CD4-positive, alpha-beta T cell (primary cell): ENCODE measurements at regions of chr7 and their contacts with region 1.

Region 1: DNA sequence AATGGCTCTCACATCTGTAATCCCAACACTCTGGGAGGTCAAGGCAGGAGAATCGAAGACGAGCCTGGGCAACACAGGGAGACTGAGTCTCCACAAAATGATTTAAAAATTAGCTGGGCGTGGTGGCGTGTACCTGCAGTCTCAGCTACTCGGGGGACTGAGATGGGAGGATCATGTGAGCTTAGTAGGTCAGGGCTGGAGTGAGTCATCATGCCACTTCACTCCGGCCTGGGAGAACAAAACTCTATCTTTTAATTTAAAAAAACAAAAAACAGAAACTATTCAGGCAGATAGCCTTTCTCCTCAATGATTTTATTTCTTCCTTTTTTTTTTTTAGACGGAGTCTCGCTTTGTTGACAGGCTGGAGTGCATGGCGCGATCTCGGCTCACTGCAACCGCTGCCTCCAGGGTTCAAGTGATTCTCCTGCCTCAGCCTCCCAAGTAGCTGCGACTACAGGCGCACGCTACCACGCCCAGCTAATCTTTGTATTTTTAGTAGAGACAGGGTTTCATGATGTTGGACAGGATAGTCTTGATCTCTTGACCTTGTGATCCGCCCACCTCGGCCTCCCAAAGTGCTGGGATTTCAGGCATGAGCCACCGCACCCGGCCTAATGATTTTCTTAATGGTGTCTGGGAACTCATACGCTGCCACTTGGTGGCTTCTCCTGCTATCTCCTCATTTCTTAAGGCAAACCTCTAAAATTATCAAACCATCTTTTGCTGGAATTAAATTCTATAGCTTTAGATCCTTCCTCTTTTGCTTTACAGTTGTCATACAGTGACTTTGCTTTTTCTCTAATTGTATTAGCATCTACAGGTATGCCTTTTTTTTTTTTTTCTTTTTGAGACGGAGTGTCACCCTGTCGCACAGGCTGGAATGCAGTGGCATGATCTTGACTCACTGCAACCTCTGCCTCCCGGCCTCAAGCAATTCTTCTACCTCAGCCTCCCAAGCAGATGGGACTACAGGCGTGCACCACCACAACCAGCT is 22.9 kb downstream of the SRPK2 start:
- DNase-seq: peak in 1 of 14 experiments; percentile 8
- ATAC-seq: no peak
- H3K4me3 ChIP-seq: no peak overlapping the region
- H3K4me3 Mint-ChIP-seq: no peak overlapping the region
- H3K27ac ChIP-seq: no peak overlapping the region
- H3K27ac Mint-ChIP-seq: no peak overlapping the region
- H3K4me1 ChIP-seq: peaks cover 9% of the 10 kb centered on the region
- H3K4me1 Mint-ChIP-seq: peaks cover 67% of the 10 kb centered on the region
- H3K27me3 ChIP-seq: no peaks in the 10 kb centered on the region
- H3K27me3 Mint-ChIP-seq: no peaks in the 10 kb centered on the region
- CTCF ChIP-seq: no peak

Region 2: GRCh38 chr7:105257338-105257737 is 108.5 kb before region 1 on chr7:
- CTCF ChIA-PET with region 1: no interaction called
- POLR2A ChIA-PET with region 1: no interaction called
- intact Hi-C with region 1: no loop called
- DNase-seq: no peak
- ATAC-seq: no peak
- H3K4me3 ChIP-seq: no peak overlapping the region
- H3K4me3 Mint-ChIP-seq: no peak overlapping the region
- H3K27ac ChIP-seq: no peak overlapping the region
- H3K27ac Mint-ChIP-seq: no peak overlapping the region
- H3K4me1 ChIP-seq: peaks cover 7% of the 10 kb centered on the region
- H3K4me1 Mint-ChIP-seq: peaks cover 61% of the 10 kb centered on the region
- H3K27me3 ChIP-seq: no peaks in the 10 kb centered on the region
- H3K27me3 Mint-ChIP-seq: no peaks in the 10 kb centered on the region
- CTCF ChIP-seq: no peak

Region 3: GRCh38 chr7:105352018-105352612 is 13.7 kb before region 1 on chr7:
- CTCF ChIA-PET with region 1: no interaction called
- POLR2A ChIA-PET with region 1: interaction called, 12 read pairs
- intact Hi-C with region 1: no loop called
- DNase-seq: peak; percentile 15 to 93 (median 48)
- ATAC-seq: peak; percentile 97
- H3K4me3 ChIP-seq: peak overlapping the region; percentile 23
- H3K4me3 Mint-ChIP-seq: peak overlapping the region; percentile 87
- H3K27ac ChIP-seq: peak overlapping the region; percentile 14 to 19
- H3K27ac Mint-ChIP-seq: peak overlapping the region; percentile 89
- H3K4me1 ChIP-seq: peaks cover 85% of the 10 kb centered on the region
- H3K4me1 Mint-ChIP-seq: peaks cover 77% of the 10 kb centered on the region
- H3K27me3 ChIP-seq: no peaks in the 10 kb centered on the region
- H3K27me3 Mint-ChIP-seq: no peaks in the 10 kb centered on the region
- CTCF ChIP-seq: no peak

Region 4: DNA sequence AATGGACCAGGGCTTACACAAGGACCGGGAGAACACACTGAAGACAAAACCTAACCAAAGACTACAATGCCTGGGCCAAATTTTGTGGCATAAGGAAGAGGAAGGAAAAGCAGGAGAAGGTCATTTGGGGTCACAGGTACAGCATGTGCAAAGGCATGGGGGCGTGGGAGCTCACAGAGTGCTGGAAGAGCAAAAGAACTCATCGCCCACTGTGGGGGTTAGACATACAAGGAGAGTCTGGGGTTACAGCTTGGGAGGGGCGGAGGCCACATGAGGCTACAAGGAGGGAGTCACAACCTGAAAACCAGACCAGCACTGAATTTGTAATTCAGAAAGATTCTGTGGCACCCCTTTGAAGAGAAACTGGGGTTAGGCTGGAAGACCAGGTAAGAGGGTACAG is 146.6 kb after region 1 on chr7:
- CTCF ChIA-PET with region 1: no interaction called
- POLR2A ChIA-PET with region 1: no interaction called
- intact Hi-C with region 1: no loop called
- DNase-seq: no peak
- ATAC-seq: no peak
- H3K4me3 ChIP-seq: no peak overlapping the region
- H3K4me3 Mint-ChIP-seq: no peak overlapping the region
- H3K27ac ChIP-seq: no peak overlapping the region
- H3K27ac Mint-ChIP-seq: no peak overlapping the region
- H3K4me1 ChIP-seq: no peaks in the 10 kb centered on the region
- H3K4me1 Mint-ChIP-seq: peaks cover 5% of the 10 kb centered on the region
- H3K27me3 ChIP-seq: no peaks in the 10 kb centered on the region
- H3K27me3 Mint-ChIP-seq: no peaks in the 10 kb centered on the region
- CTCF ChIP-seq: no peak